ENCODE measurements at regions of chr2 and their contacts with region 1.

Region 1: GRCh38 chr2:10668402-10669012 is 21.3 kb downstream of the NOL10 start:
- DNase-seq: no peak
- ATAC-seq: no peak
- H3K4me3 ChIP-seq: no peak overlapping the region
- H3K27ac ChIP-seq: no peak overlapping the region
- H3K4me1 ChIP-seq: peaks cover 0 to 3% (median 0%) of the 10 kb centered on the region in 12 donors
- H3K27me3 ChIP-seq: no peaks in the 10 kb centered on the region
- CTCF ChIP-seq: peak; percentile 62 to 85 (median 70)
- POLR2A ChIP-seq: no peak

Region 2: GRCh38 chr2:10122386-10123280 is 545.9 kb before region 1 on chr2 and contains the start of gene RRM2:
- intact Hi-C with region 1: loop called in 6 of 10 experiments (anchors 5 to 10 kb)
- DNase-seq: peak; percentile 92 to 96 (median 94)
- ATAC-seq: peak; percentile 90 to 94 (median 93)
- H3K4me3 ChIP-seq: peak within 1 kb of the TSS; percentile 35 to 79 (median 54)
- H3K27ac ChIP-seq: no peak within 1 kb of the TSS
- H3K4me1 ChIP-seq: peaks cover 10 to 66% (median 21%) of the 10 kb centered on the region in 12 donors
- H3K27me3 ChIP-seq: peaks cover 8 to 24% (median 12%) of the 10 kb centered on the region in 9 donors
- CTCF ChIP-seq: peak in 2 of 12 donors; percentile 8 to 11
- POLR2A ChIP-seq: no peak
- total RNA-seq, gene RRM2: 0.09 to 32.6 (median 1.3) TPM in 8 of 9 donors, not detected in the other

Region 3: GRCh38 chr2:10773821-10774341 is 105.4 kb after region 1 on chr2:
- intact Hi-C with region 1: no loop called
- DNase-seq: no peak
- ATAC-seq: peak in 3 of 4 donors; percentile 3 to 15 (median 8)
- H3K4me3 ChIP-seq: no peak overlapping the region
- H3K27ac ChIP-seq: peak overlapping the region in 10 of 12 donors; percentile 30 to 86 (median 50)
- H3K4me1 ChIP-seq: peaks cover 0 to 28% (median 13%) of the 10 kb centered on the region in 12 donors
- H3K27me3 ChIP-seq: no peaks in the 10 kb centered on the region
- CTCF ChIP-seq: no peak
- POLR2A ChIP-seq: no peak

Measured in heart left ventricle (tissue), 16 donors.